ENCODE measurements at regions of chr13 and their contacts with region 1.

Region 1: GRCh38 chr13:52194184-52194868 is 34.9 kb upstream of the NEK3 start:
- DNase-seq: peak; percentile 85
- H3K4me3 Mint-ChIP-seq: peak overlapping the region; percentile 95
- H3K27ac Mint-ChIP-seq: peak overlapping the region; percentile 95
- H3K4me1 Mint-ChIP-seq: peaks cover 20% of the 10 kb centered on the region
- H3K27me3 Mint-ChIP-seq: no peaks in the 10 kb centered on the region

Region 2: DNA sequence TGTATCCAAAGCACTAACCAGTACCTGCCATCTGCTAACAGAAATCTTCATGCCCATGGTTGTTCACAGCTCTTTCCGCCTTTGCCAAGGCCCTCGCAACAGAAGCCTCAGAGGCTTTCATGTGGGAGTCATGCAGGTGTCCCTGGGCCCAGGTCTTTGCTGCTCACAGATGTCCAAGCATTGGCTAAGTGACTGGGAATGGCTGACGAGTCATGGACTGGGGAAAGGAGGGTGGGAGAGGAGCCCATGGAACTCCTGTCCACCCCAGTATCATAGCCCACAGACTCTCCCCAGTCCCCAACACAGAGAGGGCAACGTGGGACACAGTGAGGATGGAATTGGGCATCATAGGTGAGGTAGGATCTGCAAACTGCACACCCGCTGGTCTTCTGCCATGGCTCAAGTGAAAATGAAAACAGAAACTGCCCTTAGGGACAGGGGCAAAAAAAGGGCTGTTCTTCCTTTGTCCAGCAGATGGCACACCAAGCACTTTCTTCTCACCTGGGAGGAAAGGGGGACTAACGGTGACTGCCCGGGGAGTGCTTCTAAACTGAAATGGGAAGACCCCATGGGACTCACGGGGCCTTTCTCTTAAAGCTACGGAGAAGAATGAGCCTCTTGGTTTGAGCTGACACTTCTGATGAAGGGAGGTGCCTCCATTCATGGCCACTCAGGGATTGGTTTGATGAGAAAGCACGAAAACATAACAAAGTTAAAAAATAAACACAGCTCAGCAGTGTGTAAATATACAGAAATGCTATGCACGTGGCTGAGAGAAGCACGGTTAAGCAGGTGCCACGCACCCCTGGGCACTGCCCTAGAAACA is 379.3 kb before region 1 on chr13:
- intact Hi-C with region 1: loop called (anchors 5 kb)
- DNase-seq: peak; percentile 66
- H3K4me3 Mint-ChIP-seq: peak overlapping the region; percentile 37
- H3K27ac Mint-ChIP-seq: no peak overlapping the region
- H3K4me1 Mint-ChIP-seq: peaks cover 52% of the 10 kb centered on the region
- H3K27me3 Mint-ChIP-seq: peaks cover 3% of the 10 kb centered on the region

Region 3: GRCh38 chr13:52011632-52012511 is 182.5 kb before region 1 on chr13 and contains the start of gene ALG11:
- intact Hi-C with region 1: loop called (anchors 1 kb)
- DNase-seq: peak; percentile 100
- H3K4me3 Mint-ChIP-seq: peak within 1 kb of the TSS; percentile 99
- H3K27ac Mint-ChIP-seq: peak within 1 kb of the TSS; percentile 88
- H3K4me1 Mint-ChIP-seq: peaks cover 13% of the 10 kb centered on the region
- H3K27me3 Mint-ChIP-seq: peaks cover 34% of the 10 kb centered on the region
- total RNA-seq, gene ALG11: 24.7 and 28.6 TPM in 2 replicates

Region 4: GRCh38 chr13:52159321-52160086 is 34.8 kb before region 1 on chr13 and contains the start of gene NEK3:
- intact Hi-C with region 1: loop called (anchors 1 kb)
- DNase-seq: peak; percentile 57
- H3K4me3 Mint-ChIP-seq: peak within 1 kb of the TSS; percentile 87
- H3K27ac Mint-ChIP-seq: peak within 1 kb of the TSS; percentile 76
- H3K4me1 Mint-ChIP-seq: peaks cover 51% of the 10 kb centered on the region
- H3K27me3 Mint-ChIP-seq: no peaks in the 10 kb centered on the region
- total RNA-seq, gene NEK3: 10.5 and 12.0 TPM in 2 replicates

Region 5: GRCh38 chr13:52617070-52618060 is 423.0 kb after region 1 on chr13:
- intact Hi-C with region 1: loop called (anchors 10 kb)
- DNase-seq: peak; percentile 80
- H3K4me3 Mint-ChIP-seq: peak overlapping the region; percentile 99
- H3K27ac Mint-ChIP-seq: peak overlapping the region; percentile 95
- H3K4me1 Mint-ChIP-seq: peaks cover 13% of the 10 kb centered on the region
- H3K27me3 Mint-ChIP-seq: no peaks in the 10 kb centered on the region